ENCODE measurements at regions of chr4 and their contacts with region 1.

Region 1: GRCh38 chr4:83284193-83285054 is at the start of gene COQ2:
- DNase-seq: peak; percentile 82 to 97 (median 92)
- ATAC-seq: peak; percentile 92 to 94 (median 94)
- H3K4me3 ChIP-seq: peak within 1 kb of the TSS; percentile 76 to 86
- H3K4me3 Mint-ChIP-seq: peak within 1 kb of the TSS; percentile 94 to 99 (median 97)
- H3K27ac ChIP-seq: peak within 1 kb of the TSS; percentile 83
- H3K27ac Mint-ChIP-seq: peak within 1 kb of the TSS; percentile 96 to 98
- H3K4me1 ChIP-seq: peaks cover 6 to 9% of the 10 kb centered on the region in 2 experiments
- H3K4me1 Mint-ChIP-seq: peaks cover 39 to 42% (median 40%) of the 10 kb centered on the region in 3 donors
- H3K27me3 ChIP-seq: no peaks in the 10 kb centered on the region
- H3K27me3 Mint-ChIP-seq: no peaks in the 10 kb centered on the region
- total RNA-seq, gene COQ2: 4.7 to 9.7 (median 6.2) TPM

Region 2: GRCh38 chr4:82865592-82865991 is 418.8 kb before region 1 on chr4:
- CTCF ChIA-PET with region 1: no interaction called
- POLR2A ChIA-PET with region 1: interaction called in 1 of 2 experiments, 15 read pairs
- DNase-seq: peak in 2 of 35 experiments; percentile 6 to 48
- ATAC-seq: peak; percentile 48 to 75 (median 68)
- H3K4me3 ChIP-seq: no peak overlapping the region
- H3K4me3 Mint-ChIP-seq: peak overlapping the region; percentile 31 to 57 (median 40)
- H3K27ac ChIP-seq: peak overlapping the region; percentile 28
- H3K27ac Mint-ChIP-seq: peak overlapping the region; percentile 82 to 90
- H3K4me1 ChIP-seq: peaks cover 4 to 15% of the 10 kb centered on the region in 2 experiments
- H3K4me1 Mint-ChIP-seq: peaks cover 24 to 29% (median 26%) of the 10 kb centered on the region in 3 donors
- H3K27me3 ChIP-seq: no peaks in the 10 kb centered on the region
- H3K27me3 Mint-ChIP-seq: no peaks in the 10 kb centered on the region

Region 3: DNA sequence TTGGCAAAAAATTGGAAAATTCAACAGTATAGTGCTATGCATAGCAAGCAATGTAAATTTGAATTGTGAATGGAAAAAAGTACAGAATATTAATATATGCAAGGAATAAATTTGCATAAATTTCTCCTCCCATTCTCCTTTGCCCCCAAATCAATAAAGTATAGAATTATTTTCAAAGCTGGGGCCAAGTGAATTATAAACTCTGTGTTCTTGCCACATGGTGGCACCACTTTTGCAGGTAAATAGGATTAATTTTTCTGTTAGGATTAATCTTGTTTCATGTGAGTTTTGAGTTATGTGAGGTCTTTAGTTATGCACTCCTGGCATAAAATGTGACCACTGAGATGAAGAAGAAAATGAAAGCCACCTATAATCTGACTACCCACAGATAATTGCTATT is 229.5 kb before region 1 on chr4:
- CTCF ChIA-PET with region 1: interaction called in 1 of 2 experiments, 14 read pairs
- POLR2A ChIA-PET with region 1: no interaction called
- DNase-seq: peak in 8 of 35 experiments; percentile 2 to 48 (median 8)
- ATAC-seq: peak in 1 of 4 experiments; percentile 45
- H3K4me3 ChIP-seq: no peak overlapping the region
- H3K4me3 Mint-ChIP-seq: no peak overlapping the region
- H3K27ac ChIP-seq: no peak overlapping the region
- H3K27ac Mint-ChIP-seq: no peak overlapping the region
- H3K4me1 ChIP-seq: no peaks in the 10 kb centered on the region
- H3K4me1 Mint-ChIP-seq: peaks cover 0 to 6% (median 0%) of the 10 kb centered on the region in 3 donors
- H3K27me3 ChIP-seq: no peaks in the 10 kb centered on the region
- H3K27me3 Mint-ChIP-seq: no peaks in the 10 kb centered on the region

Region 4: DNA sequence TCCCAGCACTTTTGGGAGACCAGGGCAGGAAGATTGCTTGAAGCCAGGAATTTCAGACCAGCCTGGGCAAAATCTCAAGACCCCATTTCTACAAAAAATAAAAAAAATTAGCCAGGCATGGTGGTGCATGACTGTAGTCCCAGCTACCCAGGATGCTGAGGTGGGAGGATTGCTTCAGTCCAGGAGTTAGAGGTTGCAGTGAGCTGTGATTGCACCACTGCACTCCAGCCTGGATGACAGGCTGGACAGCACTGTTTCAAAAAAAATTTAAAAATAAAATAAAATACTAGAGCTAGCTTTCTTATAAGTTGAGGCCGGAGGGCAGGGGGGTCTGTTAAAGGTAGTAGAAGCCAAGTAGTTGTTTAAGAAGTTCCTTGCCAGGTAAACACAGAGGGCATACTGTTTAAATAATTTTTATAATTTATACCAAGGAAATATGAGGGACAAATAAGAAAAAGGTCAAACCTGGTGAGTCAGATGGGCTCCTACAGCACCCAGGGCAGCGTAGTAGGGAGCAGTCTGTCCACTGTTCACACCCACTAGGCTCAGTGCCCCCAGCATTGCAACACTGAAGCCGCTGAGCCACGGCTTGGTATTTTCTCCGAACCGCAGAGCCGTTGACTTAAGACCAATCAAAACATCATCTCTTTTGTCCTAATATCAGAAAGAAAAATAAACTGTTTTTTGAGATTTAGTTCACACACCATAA is 17.1 kb before region 1 on chr4:
- CTCF ChIA-PET with region 1: interaction called, 7 to 30 read pairs
- POLR2A ChIA-PET with region 1: interaction called in 1 of 2 experiments, 13 read pairs
- DNase-seq: no peak
- ATAC-seq: no peak
- H3K4me3 ChIP-seq: no peak overlapping the region
- H3K4me3 Mint-ChIP-seq: no peak overlapping the region
- H3K27ac ChIP-seq: no peak overlapping the region
- H3K27ac Mint-ChIP-seq: no peak overlapping the region
- H3K4me1 ChIP-seq: peaks cover 0 to 8% of the 10 kb centered on the region in 2 experiments
- H3K4me1 Mint-ChIP-seq: peaks cover 0 to 8% (median 7%) of the 10 kb centered on the region in 3 donors
- H3K27me3 ChIP-seq: no peaks in the 10 kb centered on the region
- H3K27me3 Mint-ChIP-seq: no peaks in the 10 kb centered on the region

Region 5: DNA sequence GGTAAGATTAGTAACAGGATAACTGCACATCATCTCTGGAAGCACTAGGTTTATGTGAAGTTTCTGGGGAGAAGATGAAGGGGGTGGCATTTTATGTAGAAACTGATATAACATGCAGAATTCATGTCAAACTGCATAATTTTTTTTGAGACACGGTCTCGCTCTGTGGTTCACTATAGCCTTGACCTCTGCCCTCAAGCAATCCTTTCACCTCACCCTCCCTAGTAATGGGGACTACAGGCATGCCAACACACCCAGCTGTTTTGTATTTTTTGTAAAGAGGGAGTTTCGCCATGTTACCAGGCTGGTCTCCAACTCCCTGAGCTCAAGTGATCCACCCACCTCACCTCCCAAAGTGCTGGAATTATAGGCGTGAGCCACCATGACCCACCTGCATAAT is 189.0 kb after region 1 on chr4:
- CTCF ChIA-PET with region 1: no interaction called
- POLR2A ChIA-PET with region 1: no interaction called
- DNase-seq: no peak
- ATAC-seq: no peak
- H3K4me3 ChIP-seq: no peak overlapping the region
- H3K4me3 Mint-ChIP-seq: no peak overlapping the region
- H3K27ac ChIP-seq: no peak overlapping the region
- H3K27ac Mint-ChIP-seq: no peak overlapping the region
- H3K4me1 ChIP-seq: no peaks in the 10 kb centered on the region
- H3K4me1 Mint-ChIP-seq: peaks cover 0 to 6% (median 6%) of the 10 kb centered on the region in 3 donors
- H3K27me3 ChIP-seq: no peaks in the 10 kb centered on the region
- H3K27me3 Mint-ChIP-seq: no peaks in the 10 kb centered on the region

Region 6: DNA sequence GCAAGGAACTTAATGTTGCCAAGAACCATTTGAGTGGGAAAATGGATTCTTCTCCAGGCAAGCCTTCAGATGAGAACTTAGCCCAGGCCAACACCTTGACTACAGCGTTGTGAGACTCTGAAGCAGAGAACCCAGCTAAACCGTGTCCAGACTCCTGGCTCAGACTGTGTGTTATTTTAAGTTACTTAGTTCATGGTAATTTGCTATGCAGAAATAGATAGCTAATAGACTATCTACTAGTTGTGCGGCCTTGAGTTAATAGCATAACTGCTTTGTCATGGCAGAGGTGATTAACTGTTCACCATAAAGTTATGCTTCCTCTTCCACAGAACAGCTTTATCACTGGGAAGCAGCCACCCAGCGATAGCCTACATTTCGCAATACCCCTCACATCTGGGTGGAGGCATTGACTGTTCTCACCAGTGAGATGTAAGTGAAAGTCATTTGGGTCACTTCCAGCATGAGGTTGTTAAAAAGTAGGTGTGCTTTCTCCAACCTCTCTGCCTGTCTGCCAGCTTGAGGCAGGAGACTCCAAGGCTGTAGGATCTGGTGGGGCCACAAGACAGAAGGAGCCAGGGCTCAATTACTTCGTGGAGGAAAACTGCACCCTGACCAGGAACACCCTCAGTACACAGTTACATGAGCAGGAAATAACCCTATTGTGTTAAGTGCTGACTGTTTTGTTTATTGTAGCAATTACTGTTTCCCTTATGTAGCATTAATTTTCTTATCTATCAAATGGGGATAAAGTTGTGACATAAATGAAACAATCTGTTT is 345.7 kb after region 1 on chr4:
- CTCF ChIA-PET with region 1: no interaction called
- POLR2A ChIA-PET with region 1: no interaction called
- DNase-seq: peak in 4 of 35 experiments; percentile 5 to 25 (median 6)
- ATAC-seq: no peak
- H3K4me3 ChIP-seq: no peak overlapping the region
- H3K4me3 Mint-ChIP-seq: no peak overlapping the region
- H3K27ac ChIP-seq: no peak overlapping the region
- H3K27ac Mint-ChIP-seq: no peak overlapping the region
- H3K4me1 ChIP-seq: no peaks in the 10 kb centered on the region
- H3K4me1 Mint-ChIP-seq: no peaks in the 10 kb centered on the region
- H3K27me3 ChIP-seq: peaks cover 0 to 4% of the 10 kb centered on the region in 2 experiments
- H3K27me3 Mint-ChIP-seq: peaks cover 8 to 21% of the 10 kb centered on the region in 2 donors